ENCODE measurements at regions of chr17 and their contacts with region 1.

Region 1: DNA sequence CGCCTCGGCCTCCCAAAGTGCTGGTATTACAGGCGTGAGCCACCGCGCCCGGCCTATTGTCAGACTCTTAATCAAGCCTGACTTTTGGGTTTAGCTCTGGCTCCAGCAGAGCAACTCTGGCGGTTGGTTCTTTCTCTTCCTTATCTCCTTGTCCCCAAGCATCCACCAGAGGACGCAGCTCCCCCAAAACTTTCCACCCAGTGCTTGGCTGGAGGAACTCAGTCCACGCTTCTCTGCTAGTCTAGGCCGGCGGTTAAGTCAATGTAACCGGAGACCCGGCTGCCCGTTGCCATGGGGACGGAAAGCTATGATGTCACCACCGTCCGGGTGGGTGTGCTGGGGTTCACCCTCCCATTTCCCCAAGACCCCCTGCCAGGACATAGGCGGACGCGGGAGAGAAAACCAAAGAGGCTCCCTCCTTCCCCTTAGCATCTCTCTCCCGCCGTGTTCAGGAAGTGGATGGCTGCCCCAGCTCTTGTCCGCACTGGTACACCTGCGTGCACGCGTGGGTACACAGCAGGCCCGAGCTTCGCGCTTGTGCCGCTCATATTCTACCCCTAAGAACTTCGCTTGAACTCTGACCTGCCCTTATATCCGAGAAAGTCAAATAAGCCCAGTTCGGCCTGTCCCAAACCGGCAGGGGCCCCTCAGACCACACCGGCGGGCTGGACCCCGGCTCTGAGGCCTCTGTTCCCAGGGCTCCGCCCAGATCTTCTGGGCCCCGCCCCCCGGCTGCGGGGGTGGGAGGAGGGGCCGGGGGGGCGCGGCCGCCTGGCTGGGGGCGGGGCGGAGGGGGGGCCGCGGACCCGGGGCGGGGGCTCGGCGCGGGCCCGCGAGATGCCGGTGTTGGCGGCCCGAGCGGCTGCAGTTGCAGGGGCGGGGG is at the start of gene RND2:
- DNase-seq: peak; percentile 93
- H3K4me3 Mint-ChIP-seq: peak within 1 kb of the TSS; percentile 71
- H3K27ac Mint-ChIP-seq: peak within 1 kb of the TSS; percentile 61
- H3K4me1 Mint-ChIP-seq: peaks cover 14% of the 10 kb centered on the region
- H3K27me3 Mint-ChIP-seq: no peaks in the 10 kb centered on the region
- CTCF ChIP-seq: peak; percentile 51
- total RNA-seq, gene RND2: 0.16 TPM in 1 of 2 replicates, not detected in the other

Region 2: DNA sequence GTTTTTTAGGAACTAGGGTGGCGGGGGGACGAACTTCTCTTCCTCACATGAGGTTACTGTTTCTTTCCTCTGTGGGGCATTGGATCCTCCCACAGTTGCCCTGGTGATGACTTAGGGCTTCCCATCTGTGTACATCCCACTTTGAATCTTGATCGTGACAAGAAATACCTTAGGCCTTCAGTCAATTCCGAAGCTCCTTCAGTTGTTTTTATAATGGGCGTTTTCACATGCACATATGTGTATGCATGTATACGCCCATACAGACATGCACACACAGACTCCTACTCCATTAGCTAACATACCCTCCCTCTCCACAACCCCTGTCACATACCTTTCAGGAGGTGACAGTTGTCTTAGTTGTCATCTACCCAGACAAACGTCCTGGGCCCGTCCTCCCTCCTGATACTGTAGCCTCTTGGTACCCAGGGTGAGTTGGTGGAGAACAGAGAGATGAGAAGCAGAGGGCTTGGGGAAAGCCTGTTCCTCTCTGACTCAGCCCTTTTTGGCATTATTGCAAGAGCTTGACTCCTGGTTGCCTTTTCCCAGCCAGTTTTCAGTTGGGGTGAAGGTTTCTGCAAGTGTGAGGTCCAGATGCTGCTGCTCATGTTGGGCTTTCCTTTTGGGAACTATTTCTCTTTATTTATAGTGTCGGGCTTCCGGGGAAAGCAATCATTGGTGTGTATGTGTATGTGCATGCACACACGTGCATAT is 182.5 kb before region 1 on chr17:
- CTCF ChIA-PET with region 1: no interaction called
- POLR2A ChIA-PET with region 1: no interaction called
- intact Hi-C with region 1: no loop called
- DNase-seq: no peak
- H3K4me3 Mint-ChIP-seq: no peak overlapping the region
- H3K27ac Mint-ChIP-seq: no peak overlapping the region
- H3K4me1 Mint-ChIP-seq: peaks cover 13% of the 10 kb centered on the region
- H3K27me3 Mint-ChIP-seq: no peaks in the 10 kb centered on the region
- CTCF ChIP-seq: no peak

Region 3: DNA sequence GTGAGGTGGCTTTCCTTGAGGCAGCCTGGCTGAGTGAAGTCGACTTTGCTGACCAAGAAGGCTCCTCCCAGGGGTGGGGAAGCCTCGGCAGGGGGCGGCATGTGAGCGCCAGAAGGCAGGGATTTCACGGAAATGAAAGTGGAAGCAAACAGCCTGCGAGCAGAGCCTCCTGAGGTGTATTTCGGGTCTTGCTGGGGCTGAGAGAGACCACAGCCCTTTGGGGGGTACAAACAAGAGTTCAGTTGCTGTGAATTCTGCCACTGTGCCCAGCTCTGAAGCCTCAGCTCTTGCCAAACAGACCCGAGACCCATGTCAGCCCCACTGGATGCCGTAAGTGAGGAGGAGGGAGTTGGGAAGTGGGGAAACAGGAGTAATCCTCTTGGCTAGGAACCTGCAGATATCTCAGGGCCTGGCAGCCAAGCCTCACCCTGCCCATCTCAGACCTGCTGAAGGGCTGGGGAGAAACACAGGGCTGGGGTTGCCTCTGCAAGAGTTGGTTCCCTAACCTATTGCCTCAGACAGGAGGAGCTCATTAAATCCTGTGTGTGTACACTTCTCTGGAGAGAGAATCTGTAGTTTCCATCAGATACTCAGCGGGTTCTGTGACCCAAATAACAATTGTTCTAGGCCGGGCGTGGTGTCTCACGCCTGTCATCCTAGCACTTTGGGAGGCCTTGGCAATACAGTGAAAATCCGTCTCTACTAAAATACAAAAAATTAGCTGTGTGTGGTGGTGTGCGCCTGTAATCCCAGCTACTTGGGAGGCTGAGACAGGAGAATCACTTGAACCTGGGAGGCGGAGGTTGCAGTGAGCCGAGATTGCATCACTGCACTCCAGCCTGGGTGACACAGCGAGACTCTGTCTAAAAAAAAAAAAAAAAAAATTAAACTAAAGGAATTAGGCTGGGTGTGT is 17.8 kb before region 1 on chr17 and contains the start of gene IFI35:
- CTCF ChIA-PET with region 1: interaction called, 4 read pairs
- POLR2A ChIA-PET with region 1: interaction called, 30 read pairs
- intact Hi-C with region 1: no loop called
- DNase-seq: peak; percentile 86
- H3K4me3 Mint-ChIP-seq: peak within 1 kb of the TSS; percentile 96
- H3K27ac Mint-ChIP-seq: peak within 1 kb of the TSS; percentile 98
- H3K4me1 Mint-ChIP-seq: peaks cover 11% of the 10 kb centered on the region
- H3K27me3 Mint-ChIP-seq: no peaks in the 10 kb centered on the region
- CTCF ChIP-seq: no peak
- total RNA-seq, gene IFI35: 6.3 and 7.3 TPM in 2 replicates

Region 4: GRCh38 chr17:43125133-43125966 is 100.7 kb after region 1 on chr17 and contains the start of gene BRCA1:
- CTCF ChIA-PET with region 1: interaction called, 3 read pairs
- POLR2A ChIA-PET with region 1: interaction called, 6 read pairs
- intact Hi-C with region 1: loop called (anchors 1 kb)
- DNase-seq: peak; percentile 99
- H3K4me3 Mint-ChIP-seq: peak within 1 kb of the TSS; percentile 99
- H3K27ac Mint-ChIP-seq: peak within 1 kb of the TSS; percentile 88
- H3K4me1 Mint-ChIP-seq: peaks cover 26% of the 10 kb centered on the region
- H3K27me3 Mint-ChIP-seq: no peaks in the 10 kb centered on the region
- CTCF ChIP-seq: no peak
- total RNA-seq, gene BRCA1: 12.4 and 18.1 TPM in 2 replicates

Region 5: GRCh38 chr17:43170766-43171585 is 146.3 kb after region 1 on chr17 and contains the start of gene NBR1:
- CTCF ChIA-PET with region 1: interaction called, 3 read pairs
- POLR2A ChIA-PET with region 1: interaction called, 24 read pairs
- intact Hi-C with region 1: loop called (anchors 5 kb)
- DNase-seq: peak; percentile 99
- H3K4me3 Mint-ChIP-seq: no peak within 1 kb of the TSS
- H3K27ac Mint-ChIP-seq: no peak within 1 kb of the TSS
- H3K4me1 Mint-ChIP-seq: no peaks in the 10 kb centered on the region
- H3K27me3 Mint-ChIP-seq: no peaks in the 10 kb centered on the region
- CTCF ChIP-seq: no peak
- total RNA-seq, gene NBR1: 105 and 106 TPM in 2 replicates

Region 6: DNA sequence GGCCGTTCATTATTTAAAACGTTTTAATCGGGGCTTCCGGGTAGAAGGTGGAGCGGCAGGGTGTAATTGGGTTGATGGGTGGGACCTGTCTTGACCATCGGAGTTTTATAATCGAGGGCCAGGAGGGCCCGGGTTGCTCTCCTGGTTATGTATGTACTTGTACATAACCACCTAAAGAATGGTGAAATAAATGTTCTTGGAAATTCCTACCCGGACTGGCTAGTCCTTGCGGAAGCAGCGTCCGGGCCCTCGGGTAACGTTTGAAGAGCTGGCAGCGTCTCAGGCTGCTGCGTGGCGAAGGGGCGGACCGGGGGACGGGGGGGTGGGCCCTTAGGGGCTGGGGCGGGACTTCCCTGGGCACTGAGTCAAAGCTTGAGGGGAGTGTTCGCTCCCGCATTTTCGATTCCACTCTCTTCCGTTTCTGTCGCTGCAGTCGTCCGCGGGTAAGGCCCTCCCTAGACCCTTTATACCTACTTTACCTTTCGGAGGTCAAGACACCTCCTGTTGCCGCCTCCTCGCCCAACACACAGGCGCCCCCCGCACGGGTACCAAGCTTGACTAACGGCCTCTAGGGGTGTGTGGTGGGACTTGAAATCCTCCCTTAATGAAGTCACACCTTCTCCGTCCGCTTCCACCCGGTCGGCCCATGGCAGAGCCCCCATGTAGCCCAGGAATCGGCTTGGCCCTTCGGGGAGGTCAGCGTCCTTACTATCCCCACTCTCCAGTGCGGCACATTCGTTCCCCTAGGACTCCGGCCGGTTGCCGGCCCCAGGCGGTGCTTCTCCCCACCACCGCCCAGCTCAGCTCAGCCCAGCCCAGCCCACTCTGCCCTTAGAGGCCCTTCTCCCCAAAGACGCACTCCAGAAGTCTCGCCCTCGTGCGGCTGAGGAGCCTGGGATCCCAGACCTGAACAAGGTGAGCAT is 187.1 kb after region 1 on chr17 and contains the start of gene TMEM106A:
- CTCF ChIA-PET with region 1: no interaction called
- POLR2A ChIA-PET with region 1: no interaction called
- intact Hi-C with region 1: loop called (anchors 5 kb)
- DNase-seq: peak; percentile 76
- H3K4me3 Mint-ChIP-seq: peak within 1 kb of the TSS; percentile 69
- H3K27ac Mint-ChIP-seq: peak within 1 kb of the TSS; percentile 71
- H3K4me1 Mint-ChIP-seq: peaks cover 8% of the 10 kb centered on the region
- H3K27me3 Mint-ChIP-seq: no peaks in the 10 kb centered on the region
- CTCF ChIP-seq: no peak
- total RNA-seq, gene TMEM106A: 2.1 and 2.2 TPM in 2 replicates

Region 7: GRCh38 chr17:43338886-43339516 is 314.4 kb after region 1 on chr17:
- CTCF ChIA-PET with region 1: no interaction called
- POLR2A ChIA-PET with region 1: no interaction called
- intact Hi-C with region 1: loop called (anchors 10 kb)
- DNase-seq: peak; percentile 69
- H3K4me3 Mint-ChIP-seq: no peak overlapping the region
- H3K27ac Mint-ChIP-seq: no peak overlapping the region
- H3K4me1 Mint-ChIP-seq: peaks cover 17% of the 10 kb centered on the region
- H3K27me3 Mint-ChIP-seq: no peaks in the 10 kb centered on the region
- CTCF ChIP-seq: peak; percentile 65

Measured in MCF 10A (cell line).